K562 (cell line): ENCODE measurements at regions of chr2 and their contacts with region 1.

Region 1: DNA sequence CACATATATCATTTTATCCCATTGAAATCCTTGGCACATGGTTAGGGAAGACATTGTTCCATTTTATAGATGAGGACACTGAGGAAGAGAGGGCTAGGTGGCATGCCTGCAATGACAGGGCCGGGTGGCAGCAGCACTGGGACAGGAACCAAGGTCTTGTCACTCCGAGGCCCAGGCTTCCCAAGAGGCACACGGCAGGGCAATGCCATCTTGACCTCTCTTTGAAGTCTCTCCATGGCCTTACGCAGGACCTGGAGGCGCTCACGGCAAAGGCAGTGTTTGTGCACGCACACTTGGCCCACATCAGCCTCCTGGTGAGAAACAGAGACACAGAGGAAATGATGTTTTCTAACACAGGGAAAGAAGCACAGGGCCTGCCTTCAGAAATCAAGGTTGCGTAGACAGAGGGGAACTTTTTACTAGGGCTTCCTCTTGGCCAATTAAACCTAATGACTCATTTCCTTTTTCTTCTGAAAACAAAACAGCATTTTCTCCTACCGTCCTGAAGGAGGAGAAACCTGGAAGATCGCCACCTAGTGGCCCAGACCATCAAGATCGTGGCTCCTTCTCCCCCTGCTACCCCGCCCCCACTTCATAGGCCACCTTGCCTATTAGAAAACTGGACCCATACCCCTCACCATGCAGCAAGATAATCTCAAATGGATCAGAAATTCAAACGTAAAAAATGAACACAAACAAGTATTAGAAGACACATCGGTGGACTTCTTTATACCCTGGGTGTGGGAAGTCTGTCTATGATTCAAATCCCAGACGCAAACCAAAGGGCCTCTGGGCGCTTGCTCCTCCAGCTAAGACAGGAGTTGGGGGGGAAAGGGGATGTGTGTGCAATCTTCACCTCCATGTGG is 74.6 kb upstream of the SP3 start:
- DNase-seq: peak; percentile 88 to 95 (median 89)
- ATAC-seq: peak; percentile 93
- H3K4me3 ChIP-seq: no peak overlapping the region
- H3K27ac ChIP-seq: peak overlapping the region; percentile 76
- H3K4me1 ChIP-seq: peaks cover 3 to 10% of the 10 kb centered on the region in 2 experiments; a peak in 4 of 5 replicates
- H3K27me3 ChIP-seq: no peaks in the 10 kb centered on the region; a peak in 2 of 5 replicates
- CTCF ChIP-seq: peak; percentile 96 to 97 (median 97)
- EP300 ChIP-seq: peak; percentile 63
- POLR2A ChIP-seq: no peak
- RAD21 ChIP-seq: peak; percentile 79 to 84

Region 2: GRCh38 chr2:173884025-173884802 is 155.6 kb before region 1 on chr2:
- CTCF ChIA-PET with region 1: interaction called, 3 read pairs
- POLR2A ChIA-PET with region 1: no interaction called
- in situ Hi-C with region 1: no loop called
- intact Hi-C with region 1: loop called (anchors 5 kb)
- DNase-seq: peak; percentile 51 to 74 (median 62)
- ATAC-seq: peak; percentile 97
- H3K4me3 ChIP-seq: no peak overlapping the region
- H3K27ac ChIP-seq: no peak overlapping the region
- H3K4me1 ChIP-seq: no peaks in the 10 kb centered on the region
- H3K27me3 ChIP-seq: peaks cover 13 to 27% of the 10 kb centered on the region in 2 experiments; a peak in 4 of 5 replicates
- CTCF ChIP-seq: peak; percentile 77 to 85 (median 83)
- EP300 ChIP-seq: no peak
- POLR2A ChIP-seq: no peak
- RAD21 ChIP-seq: peak; percentile 56 to 78

Region 3: DNA sequence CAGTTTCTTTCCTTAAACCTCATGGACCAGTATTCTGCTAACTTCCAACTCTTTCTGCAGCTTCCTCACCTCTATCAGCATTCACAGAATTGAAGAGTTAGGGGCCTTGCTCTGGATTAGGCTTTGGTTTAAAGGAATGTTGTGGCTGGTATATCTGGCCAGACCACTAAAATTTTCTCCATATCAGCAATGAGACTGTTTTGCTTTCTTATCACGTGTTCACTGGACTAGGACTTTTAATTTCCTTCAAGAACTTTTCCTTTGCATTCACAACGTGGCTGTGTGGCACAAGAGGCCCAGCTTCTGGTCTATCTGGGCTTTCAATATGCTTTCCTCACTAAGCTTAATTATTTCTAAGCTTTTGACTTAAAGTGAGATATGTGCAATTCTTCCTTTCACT is 108.0 kb before region 1 on chr2:
- CTCF ChIA-PET with region 1: no interaction called
- POLR2A ChIA-PET with region 1: no interaction called
- in situ Hi-C with region 1: no loop called
- intact Hi-C with region 1: no loop called
- DNase-seq: no peak
- ATAC-seq: no peak
- H3K4me3 ChIP-seq: no peak overlapping the region
- H3K27ac ChIP-seq: no peak overlapping the region
- H3K4me1 ChIP-seq: no peaks in the 10 kb centered on the region; a peak in 1 of 5 replicates
- H3K27me3 ChIP-seq: no peaks in the 10 kb centered on the region
- CTCF ChIP-seq: no peak
- EP300 ChIP-seq: no peak
- POLR2A ChIP-seq: no peak
- RAD21 ChIP-seq: no peak

Region 4: GRCh38 chr2:174023591-174024523 is 15.9 kb before region 1 on chr2:
- CTCF ChIA-PET with region 1: no interaction called
- POLR2A ChIA-PET with region 1: interaction called, 11 read pairs
- in situ Hi-C with region 1: no loop called
- intact Hi-C with region 1: no loop called
- DNase-seq: peak in 1 of 4 experiments; percentile 11
- ATAC-seq: no peak
- H3K4me3 ChIP-seq: no peak overlapping the region
- H3K27ac ChIP-seq: no peak overlapping the region
- H3K4me1 ChIP-seq: peaks cover 0 to 16% of the 10 kb centered on the region in 2 experiments; a peak in 1 of 5 replicates
- H3K27me3 ChIP-seq: peaks cover 2 to 8% of the 10 kb centered on the region in 2 experiments; a peak in 3 of 5 replicates
- CTCF ChIP-seq: no peak
- EP300 ChIP-seq: no peak
- POLR2A ChIP-seq: no peak
- RAD21 ChIP-seq: no peak

Region 5: GRCh38 chr2:174054926-174055325 is 15.1 kb after region 1 on chr2:
- CTCF ChIA-PET with region 1: no interaction called
- POLR2A ChIA-PET with region 1: no interaction called
- in situ Hi-C with region 1: no loop called
- intact Hi-C with region 1: no loop called
- DNase-seq: no peak
- ATAC-seq: no peak
- H3K4me3 ChIP-seq: no peak overlapping the region
- H3K27ac ChIP-seq: no peak overlapping the region
- H3K4me1 ChIP-seq: peaks cover 6 to 27% of the 10 kb centered on the region in 2 experiments; a peak in 4 of 5 replicates
- H3K27me3 ChIP-seq: no peaks in the 10 kb centered on the region
- CTCF ChIP-seq: no peak
- EP300 ChIP-seq: no peak
- POLR2A ChIP-seq: no peak
- RAD21 ChIP-seq: no peak